PC-9 (cell line): ENCODE measurements at regions of chr2 and their contacts with region 1.

Region 1: GRCh38 chr2:62624855-62625254 is 80.7 kb upstream of the EHBP1 start:
- DNase-seq: peak in 1 of 2 experiments; percentile 78
- H3K4me3 ChIP-seq: no peak overlapping the region
- H3K27ac ChIP-seq: no peak overlapping the region
- H3K4me1 ChIP-seq: peaks cover 15% of the 10 kb centered on the region
- H3K27me3 ChIP-seq: no peaks in the 10 kb centered on the region
- CTCF ChIP-seq: no peak

Region 2: GRCh38 chr2:62641410-62641843 is 16.6 kb after region 1 on chr2:
- CTCF ChIA-PET with region 1: no interaction called
- POLR2A ChIA-PET with region 1: no interaction called
- intact Hi-C with region 1: loop called (anchors 2 kb)
- DNase-seq: no peak
- H3K4me3 ChIP-seq: no peak overlapping the region
- H3K27ac ChIP-seq: no peak overlapping the region
- H3K4me1 ChIP-seq: 0 out of 2 replicates have a peak, but pooled peaks cover 7% of the 10 kb centered on the region
- H3K27me3 ChIP-seq: no peaks in the 10 kb centered on the region
- CTCF ChIP-seq: no peak